ENCODE measurements at regions of chr2 and their contacts with region 1.

Region 1: GRCh38 chr2:69643602-69644505 is at the start of gene AAK1:
- DNase-seq: peak; percentile 95
- H3K4me3 Mint-ChIP-seq: peak within 1 kb of the TSS; percentile 86
- H3K27ac Mint-ChIP-seq: peak within 1 kb of the TSS; percentile 99
- H3K4me1 Mint-ChIP-seq: peaks cover 64% of the 10 kb centered on the region
- H3K27me3 Mint-ChIP-seq: no peaks in the 10 kb centered on the region
- total RNA-seq, gene AAK1: 81.7 and 86.0 TPM in 2 replicates

Region 2: GRCh38 chr2:68062680-68063387 is 1581.0 kb before region 1 on chr2 and contains the start of gene C1D:
- intact Hi-C with region 1: loop called (anchors 5 kb)
- DNase-seq: peak; percentile 98
- H3K4me3 Mint-ChIP-seq: peak within 1 kb of the TSS; percentile 93
- H3K27ac Mint-ChIP-seq: peak within 1 kb of the TSS; percentile 95
- H3K4me1 Mint-ChIP-seq: peaks cover 14% of the 10 kb centered on the region
- H3K27me3 Mint-ChIP-seq: peaks cover 22% of the 10 kb centered on the region
- total RNA-seq, gene C1D: 28.9 and 33.7 TPM in 2 replicates

Region 3: GRCh38 chr2:69559442-69560146 is 84.3 kb before region 1 on chr2:
- intact Hi-C with region 1: loop called (anchors 1 kb)
- DNase-seq: peak; percentile 68
- H3K4me3 Mint-ChIP-seq: no peak overlapping the region
- H3K27ac Mint-ChIP-seq: peak overlapping the region; percentile 30
- H3K4me1 Mint-ChIP-seq: peaks cover 51% of the 10 kb centered on the region
- H3K27me3 Mint-ChIP-seq: no peaks in the 10 kb centered on the region

Region 4: GRCh38 chr2:69674316-69674670 is 30.4 kb after region 1 on chr2:
- intact Hi-C with region 1: loop called (anchors 1 kb)
- DNase-seq: no peak
- H3K4me3 Mint-ChIP-seq: no peak overlapping the region
- H3K27ac Mint-ChIP-seq: peak overlapping the region; percentile 34
- H3K4me1 Mint-ChIP-seq: peaks cover 19% of the 10 kb centered on the region
- H3K27me3 Mint-ChIP-seq: no peaks in the 10 kb centered on the region

Region 5: DNA sequence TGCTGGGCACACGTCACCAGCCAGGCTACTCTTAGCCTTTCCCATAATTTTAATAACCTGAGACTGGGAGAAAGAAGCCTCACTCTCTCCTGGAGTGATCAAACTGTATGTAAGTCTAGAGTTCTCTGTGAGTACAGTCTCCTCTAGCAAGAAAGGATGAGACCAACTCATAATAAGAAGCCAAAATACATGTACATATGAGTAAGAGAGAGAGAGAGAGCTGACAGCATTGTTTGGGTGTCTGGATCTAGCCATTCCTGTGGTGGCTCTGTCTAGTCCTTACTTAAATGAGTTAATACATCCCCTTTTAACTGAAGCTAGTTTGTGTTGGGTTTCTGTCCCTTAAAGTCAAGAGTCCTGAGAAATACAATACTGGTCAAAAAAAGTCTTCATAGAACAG is 72.1 kb after region 1 on chr2:
- intact Hi-C with region 1: loop called (anchors 1 kb)
- DNase-seq: no peak
- H3K4me3 Mint-ChIP-seq: no peak overlapping the region
- H3K27ac Mint-ChIP-seq: peak overlapping the region; percentile 1
- H3K4me1 Mint-ChIP-seq: peaks cover 17% of the 10 kb centered on the region
- H3K27me3 Mint-ChIP-seq: peaks cover 3% of the 10 kb centered on the region

Region 6: DNA sequence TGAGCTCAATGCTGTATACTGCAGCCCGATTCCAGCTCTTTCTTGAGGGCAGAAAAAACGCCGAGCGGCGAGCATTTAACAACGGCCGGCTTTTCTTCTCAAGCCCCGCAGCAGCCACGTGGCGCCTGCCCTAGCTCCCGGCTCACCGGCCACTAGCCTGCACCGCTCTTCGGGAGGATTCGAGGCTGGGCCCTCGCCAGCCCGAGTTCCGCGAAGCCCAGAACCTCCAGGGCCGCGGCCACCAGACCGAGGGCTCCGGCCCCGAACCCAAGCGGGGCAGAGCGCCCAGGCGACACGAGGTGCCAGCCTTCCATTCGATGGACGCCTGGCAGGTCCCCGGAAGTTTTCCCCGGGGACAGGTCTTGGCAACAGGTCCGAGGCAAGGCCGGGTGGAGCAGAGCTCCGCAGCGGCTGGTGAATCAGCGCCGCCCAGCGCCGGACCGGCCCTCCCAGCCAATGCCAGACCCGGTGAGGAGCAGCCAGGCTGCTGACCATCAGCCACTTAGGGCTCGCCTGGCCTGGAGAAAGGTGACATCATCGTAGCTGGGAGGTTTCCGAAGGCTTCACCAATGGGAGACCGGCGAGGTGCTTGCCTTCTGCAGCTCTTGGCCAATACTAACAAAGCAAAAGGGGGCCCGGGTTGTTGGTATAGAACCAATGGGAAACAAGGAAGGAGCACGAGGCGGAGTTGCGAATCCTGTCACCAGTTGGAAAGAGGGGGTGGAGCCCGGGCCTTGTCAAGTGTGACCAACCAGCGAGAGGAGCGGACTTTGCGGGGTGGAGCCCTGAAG is 270.5 kb after region 1 on chr2:
- intact Hi-C with region 1: loop called (anchors 10 kb)
- DNase-seq: peak; percentile 100
- H3K4me3 Mint-ChIP-seq: peak overlapping the region; percentile 86
- H3K27ac Mint-ChIP-seq: peak overlapping the region; percentile 93
- H3K4me1 Mint-ChIP-seq: peaks cover 29% of the 10 kb centered on the region
- H3K27me3 Mint-ChIP-seq: no peaks in the 10 kb centered on the region

Region 7: GRCh38 chr2:70248181-70248847 is 604.5 kb after region 1 on chr2 and contains the start of gene TIA1:
- intact Hi-C with region 1: loop called (anchors 10 kb)
- DNase-seq: peak; percentile 99
- H3K4me3 Mint-ChIP-seq: peak within 1 kb of the TSS; percentile 96
- H3K27ac Mint-ChIP-seq: peak within 1 kb of the TSS; percentile 99
- H3K4me1 Mint-ChIP-seq: peaks cover 26% of the 10 kb centered on the region
- H3K27me3 Mint-ChIP-seq: peaks cover 3% of the 10 kb centered on the region
- total RNA-seq, gene TIA1: 104 and 105 TPM in 2 replicates

Region 8: DNA sequence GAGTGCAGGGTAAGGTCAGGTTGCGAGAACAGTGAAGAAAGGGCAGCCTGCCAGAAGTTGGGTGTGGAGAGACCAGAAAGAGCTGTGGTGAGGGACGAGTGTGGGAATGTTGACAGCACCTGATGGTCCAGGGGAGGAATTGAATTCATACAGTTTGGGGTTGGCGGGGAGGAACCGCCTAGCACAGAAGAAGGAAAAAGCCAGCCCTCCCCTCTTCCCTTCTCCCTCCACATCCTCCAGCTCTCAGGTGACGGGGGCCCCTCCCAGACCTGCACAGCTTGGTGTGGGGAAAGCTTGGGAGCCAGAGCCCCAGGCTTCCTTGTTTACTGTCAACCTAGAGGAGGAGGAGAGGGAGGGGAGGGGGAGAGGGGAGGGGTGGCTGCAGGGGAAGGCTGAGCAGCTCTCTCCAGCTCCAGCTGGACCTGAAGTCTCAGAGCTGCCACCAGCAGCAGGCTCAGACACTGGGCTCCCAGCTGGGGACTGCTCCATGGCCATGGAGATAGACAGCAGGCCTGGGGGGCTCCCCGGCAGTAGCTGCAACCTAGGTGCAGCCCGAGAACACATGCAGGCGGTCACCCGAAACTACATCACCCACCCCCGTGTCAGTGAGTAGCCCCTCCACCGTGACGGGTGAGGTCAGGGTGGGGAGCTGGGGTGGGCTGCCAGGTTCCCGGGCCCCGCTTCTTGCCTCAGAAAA is 1291.8 kb after region 1 on chr2 and contains the start of gene ATP6V1B1:
- intact Hi-C with region 1: no loop called
- DNase-seq: no peak
- H3K4me3 Mint-ChIP-seq: no peak within 1 kb of the TSS
- H3K27ac Mint-ChIP-seq: no peak within 1 kb of the TSS
- H3K4me1 Mint-ChIP-seq: no peaks in the 10 kb centered on the region
- H3K27me3 Mint-ChIP-seq: peaks cover 14% of the 10 kb centered on the region
- total RNA-seq, gene ATP6V1B1: not detected in 2 replicates

Measured in activated CD4-positive, alpha-beta T cell treated with anti-CD3 and anti-CD28 coated beads, Interleukin-2, amount 10 ng/mL, durations not matched to agents 24 days and 14 days (primary cell).